Naive thymus-derived CD4-positive, alpha-beta T cell (primary cell): ENCODE measurements at regions of chr4 and their contacts with region 1.

Region 1: DNA sequence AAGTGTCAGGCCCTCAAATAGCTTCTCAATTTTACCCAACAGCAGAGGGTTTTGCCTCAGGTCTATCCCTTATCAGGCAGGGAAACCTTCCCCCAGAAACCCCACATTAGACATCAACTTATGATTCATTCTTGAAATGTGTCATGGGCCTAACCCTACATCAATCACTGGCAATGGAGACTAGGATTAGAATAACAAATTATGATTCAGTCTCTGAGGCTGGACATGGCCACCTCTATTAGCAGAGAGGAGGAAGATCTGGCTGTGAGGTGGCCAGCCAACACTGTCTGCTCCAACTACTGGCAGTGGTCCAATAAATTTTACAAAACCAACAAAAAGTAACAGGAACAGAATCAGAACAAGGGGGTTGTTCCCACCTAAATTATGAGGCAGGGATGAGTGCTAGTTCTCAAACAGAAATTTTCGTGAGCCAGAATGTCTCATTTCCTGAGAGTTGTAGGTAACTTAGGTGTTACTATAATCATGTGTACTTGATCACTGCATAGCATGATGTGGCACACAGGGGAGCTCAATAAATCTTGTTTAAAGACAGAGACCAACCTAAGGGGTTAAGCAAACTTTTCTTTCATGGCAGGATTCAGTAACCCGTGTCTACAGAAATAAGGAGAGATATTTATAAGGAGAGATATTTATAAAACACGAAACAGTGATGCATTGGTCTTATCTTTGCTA is 126.8 kb downstream of the NFKB1 start:
- DNase-seq: no peak
- ATAC-seq: no peak
- H3K4me3 ChIP-seq: no peak overlapping the region
- H3K4me3 Mint-ChIP-seq: peak overlapping the region in 4 of 10 donors; percentile 16 to 92 (median 58)
- H3K27ac ChIP-seq: no peak overlapping the region
- H3K27ac Mint-ChIP-seq: peak overlapping the region in 7 of 9 donors; percentile 15 to 100 (median 87)
- H3K4me1 ChIP-seq: peaks cover 29 to 42% of the 10 kb centered on the region in 2 donors
- H3K4me1 Mint-ChIP-seq: peaks cover 29 to 91% (median 65%) of the 10 kb centered on the region in 7 donors
- H3K27me3 ChIP-seq: no peaks in the 10 kb centered on the region
- H3K27me3 Mint-ChIP-seq: no peaks in the 10 kb centered on the region

Region 2: GRCh38 chr4:101931618-101932017 is 696.4 kb before region 1 on chr4:
- CTCF ChIA-PET with region 1: no interaction called
- POLR2A ChIA-PET with region 1: no interaction called
- intact Hi-C with region 1: no loop called
- DNase-seq: no peak
- ATAC-seq: no peak
- H3K4me3 ChIP-seq: no peak overlapping the region
- H3K4me3 Mint-ChIP-seq: no peak overlapping the region
- H3K27ac ChIP-seq: no peak overlapping the region
- H3K27ac Mint-ChIP-seq: no peak overlapping the region
- H3K4me1 ChIP-seq: no peaks in the 10 kb centered on the region
- H3K4me1 Mint-ChIP-seq: no peaks in the 10 kb centered on the region
- H3K27me3 ChIP-seq: no peaks in the 10 kb centered on the region
- H3K27me3 Mint-ChIP-seq: peaks cover 0 to 25% (median 4%) of the 10 kb centered on the region in 5 donors

Region 3: GRCh38 chr4:102399021-102399420 is 229.0 kb before region 1 on chr4:
- CTCF ChIA-PET with region 1: no interaction called
- POLR2A ChIA-PET with region 1: no interaction called
- intact Hi-C with region 1: no loop called
- DNase-seq: no peak
- ATAC-seq: peak; percentile 70
- H3K4me3 ChIP-seq: no peak overlapping the region
- H3K4me3 Mint-ChIP-seq: no peak overlapping the region
- H3K27ac ChIP-seq: no peak overlapping the region
- H3K27ac Mint-ChIP-seq: no peak overlapping the region
- H3K4me1 ChIP-seq: no peaks in the 10 kb centered on the region
- H3K4me1 Mint-ChIP-seq: no peaks in the 10 kb centered on the region
- H3K27me3 ChIP-seq: no peaks in the 10 kb centered on the region
- H3K27me3 Mint-ChIP-seq: peaks cover 0 to 6% (median 0%) of the 10 kb centered on the region in 5 donors

Region 4: DNA sequence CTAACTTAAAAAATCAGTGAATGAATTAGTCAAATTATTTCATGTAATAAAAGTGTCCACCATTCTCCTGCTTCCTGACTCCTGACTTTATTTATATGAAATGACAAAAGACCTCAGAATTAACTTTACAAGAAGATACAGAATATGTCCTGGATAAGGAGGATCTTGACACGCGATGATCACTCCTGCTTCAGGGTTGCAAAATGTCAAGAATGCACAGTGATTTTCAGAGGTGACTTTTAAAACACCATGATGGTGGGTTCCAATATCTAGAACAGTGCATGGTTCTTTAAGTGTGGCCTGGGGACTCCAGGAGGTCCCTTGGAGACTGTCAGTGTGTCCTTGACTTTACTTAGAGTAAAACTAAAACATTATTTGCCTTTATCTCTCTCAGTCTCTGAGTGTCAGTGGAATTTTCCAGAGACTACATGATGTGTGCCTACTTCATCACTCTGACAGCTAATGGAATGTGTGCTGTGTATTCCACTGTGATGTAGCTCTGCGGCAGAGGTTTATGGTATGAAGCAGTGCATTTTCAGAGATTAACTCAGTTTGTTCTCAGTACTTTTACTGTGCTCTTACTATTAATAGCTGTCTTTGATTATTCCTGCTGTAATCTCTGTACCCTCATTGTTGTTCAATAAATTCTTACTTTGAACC is 47.0 kb after region 1 on chr4:
- CTCF ChIA-PET with region 1: no interaction called
- POLR2A ChIA-PET with region 1: no interaction called
- intact Hi-C with region 1: loop called in 1 of 2 experiments (anchors 5 kb)
- DNase-seq: no peak
- ATAC-seq: no peak
- H3K4me3 ChIP-seq: no peak overlapping the region
- H3K4me3 Mint-ChIP-seq: no peak overlapping the region
- H3K27ac ChIP-seq: no peak overlapping the region
- H3K27ac Mint-ChIP-seq: no peak overlapping the region
- H3K4me1 ChIP-seq: no peaks in the 10 kb centered on the region
- H3K4me1 Mint-ChIP-seq: peaks cover 0 to 14% (median 8%) of the 10 kb centered on the region in 7 donors
- H3K27me3 ChIP-seq: no peaks in the 10 kb centered on the region
- H3K27me3 Mint-ChIP-seq: no peaks in the 10 kb centered on the region

Region 5: DNA sequence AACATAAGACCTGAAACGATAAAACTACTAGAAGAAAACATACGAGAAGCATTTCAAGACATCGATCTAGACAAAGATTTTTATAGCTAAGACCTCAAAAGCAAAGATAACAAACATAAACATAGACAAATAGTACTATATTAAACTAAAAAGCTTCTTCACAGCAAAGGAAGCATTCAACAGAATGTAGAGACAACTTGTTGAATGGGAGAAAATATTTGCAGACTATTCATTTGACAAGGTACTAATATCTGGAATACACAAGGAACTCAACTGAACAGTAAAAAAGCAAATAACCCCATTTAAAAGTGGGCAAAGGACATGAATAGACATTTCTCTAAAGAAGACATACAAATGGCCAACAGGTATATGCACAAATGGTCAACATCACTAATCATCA is 83.0 kb after region 1 on chr4:
- CTCF ChIA-PET with region 1: no interaction called
- POLR2A ChIA-PET with region 1: no interaction called
- intact Hi-C with region 1: loop called in 1 of 2 experiments (anchors 2 kb)
- DNase-seq: no peak
- ATAC-seq: no peak
- H3K4me3 ChIP-seq: no peak overlapping the region
- H3K4me3 Mint-ChIP-seq: no peak overlapping the region
- H3K27ac ChIP-seq: no peak overlapping the region
- H3K27ac Mint-ChIP-seq: peak overlapping the region in 1 of 9 donors; percentile 0
- H3K4me1 ChIP-seq: no peaks in the 10 kb centered on the region
- H3K4me1 Mint-ChIP-seq: peaks cover 3 to 21% (median 10%) of the 10 kb centered on the region in 7 donors
- H3K27me3 ChIP-seq: no peaks in the 10 kb centered on the region
- H3K27me3 Mint-ChIP-seq: no peaks in the 10 kb centered on the region